K562 (cell line): ENCODE measurements at regions of chr7 and their contacts with region 1.

Region 1: GRCh38 chr7:106223156-106223555 is 61.6 kb downstream of the NAMPT start:
- DNase-seq: no peak
- ATAC-seq: no peak
- H3K4me3 ChIP-seq: no peak overlapping the region
- H3K27ac ChIP-seq: no peak overlapping the region
- H3K4me1 ChIP-seq: no peaks in the 10 kb centered on the region; a peak in 1 of 5 replicates
- H3K27me3 ChIP-seq: no peaks in the 10 kb centered on the region
- CTCF ChIP-seq: no peak
- EP300 ChIP-seq: no peak
- POLR2A ChIP-seq: no peak
- RAD21 ChIP-seq: no peak

Region 2: DNA sequence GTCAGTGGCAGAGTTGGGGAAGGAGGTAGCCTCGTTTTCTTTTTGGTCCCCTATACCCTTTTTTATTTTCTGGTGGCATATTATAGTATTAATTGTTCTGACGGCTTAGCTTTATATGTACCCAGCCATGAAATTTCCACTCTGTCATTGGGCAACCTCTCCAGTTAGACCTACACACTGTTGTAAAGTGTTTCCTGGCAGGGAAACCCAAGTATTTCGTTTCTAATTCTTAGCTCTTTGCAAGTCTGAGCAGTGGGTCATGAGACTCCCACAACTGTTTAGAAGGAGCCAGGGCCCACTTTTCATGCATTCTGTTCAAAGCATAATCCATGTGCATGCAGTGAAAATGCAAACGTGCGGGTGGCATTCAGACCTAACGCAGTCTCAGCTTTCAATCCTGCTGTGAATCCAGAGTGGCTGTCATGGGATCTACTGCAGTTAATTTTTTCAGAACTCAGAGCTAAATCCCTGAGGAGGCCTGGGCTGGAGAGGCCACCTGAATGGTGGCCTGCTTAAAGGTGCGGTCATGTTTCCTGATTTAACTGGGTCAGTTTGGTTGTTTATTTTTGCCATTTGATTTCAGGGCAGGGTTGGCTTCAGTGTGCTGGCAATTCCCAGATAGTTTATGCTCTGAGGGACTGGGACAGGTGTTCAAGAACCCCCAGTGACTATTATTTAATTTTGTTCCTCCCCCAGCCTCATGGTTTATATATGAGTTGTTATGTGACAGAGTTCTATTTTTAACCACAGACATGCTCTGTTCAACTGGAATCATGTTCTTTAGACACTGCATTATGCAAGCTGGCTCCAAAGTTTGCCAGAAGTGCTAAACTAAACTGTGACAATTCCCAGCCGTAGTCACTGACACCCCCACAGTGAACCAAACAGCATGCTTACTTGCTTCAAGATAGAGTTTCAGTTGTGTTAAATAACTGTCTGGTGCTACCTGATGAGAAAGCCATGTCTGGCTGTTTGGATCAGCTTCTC is 83.6 kb before region 1 on chr7:
- CTCF ChIA-PET with region 1: no interaction called
- POLR2A ChIA-PET with region 1: no interaction called
- in situ Hi-C with region 1: no loop called
- intact Hi-C with region 1: no loop called
- DNase-seq: no peak
- ATAC-seq: no peak; the same call in 1 of the 3 replicates
- H3K4me3 ChIP-seq: no peak overlapping the region
- H3K27ac ChIP-seq: no peak overlapping the region
- H3K4me1 ChIP-seq: no peaks in the 10 kb centered on the region
- H3K27me3 ChIP-seq: peaks cover 51 to 59% of the 10 kb centered on the region in 2 experiments
- CTCF ChIP-seq: no peak
- EP300 ChIP-seq: no peak
- POLR2A ChIP-seq: no peak
- RAD21 ChIP-seq: no peak

Region 3: GRCh38 chr7:106187613-106188350 is 35.4 kb before region 1 on chr7:
- CTCF ChIA-PET with region 1: no interaction called
- POLR2A ChIA-PET with region 1: no interaction called
- in situ Hi-C with region 1: no loop called
- intact Hi-C with region 1: loop called (anchors 5 kb)
- DNase-seq: peak in 1 of 4 experiments; percentile 28
- ATAC-seq: peak; percentile 57
- H3K4me3 ChIP-seq: no peak overlapping the region
- H3K27ac ChIP-seq: no peak overlapping the region
- H3K4me1 ChIP-seq: no peaks in the 10 kb centered on the region; a peak in 1 of 5 replicates
- H3K27me3 ChIP-seq: peaks cover 0 to 3% of the 10 kb centered on the region in 2 experiments; a peak in 3 of 5 replicates
- CTCF ChIP-seq: no peak
- EP300 ChIP-seq: no peak
- POLR2A ChIP-seq: no peak
- RAD21 ChIP-seq: no peak

Region 4: DNA sequence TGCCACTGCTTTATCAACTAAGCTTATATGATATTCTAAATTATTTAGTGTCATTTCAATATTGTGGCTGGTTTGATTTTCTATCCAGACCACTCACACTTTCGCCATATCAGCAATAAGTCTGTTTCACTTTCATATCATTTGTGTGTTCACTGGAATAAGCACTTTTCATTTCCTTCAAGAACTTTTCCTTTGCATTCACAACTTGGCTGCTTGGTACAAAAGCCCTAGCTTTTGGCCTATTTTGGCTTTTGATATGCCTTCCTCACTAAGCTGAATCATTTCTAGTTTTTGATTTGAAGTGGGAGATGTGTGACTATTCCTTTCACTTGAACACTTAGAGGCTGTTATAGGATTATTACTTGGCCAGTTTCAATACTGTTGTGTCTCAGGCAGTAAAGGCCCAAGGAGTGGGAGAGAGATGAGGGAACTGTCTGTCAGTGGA is 182.6 kb after region 1 on chr7:
- CTCF ChIA-PET with region 1: no interaction called
- POLR2A ChIA-PET with region 1: no interaction called
- in situ Hi-C with region 1: no loop called
- intact Hi-C with region 1: no loop called
- DNase-seq: no peak
- ATAC-seq: no peak
- H3K4me3 ChIP-seq: no peak overlapping the region
- H3K27ac ChIP-seq: no peak overlapping the region
- H3K4me1 ChIP-seq: no peaks in the 10 kb centered on the region
- H3K27me3 ChIP-seq: 0 out of 5 replicates have a peak, but pooled peaks cover 0 to 2% of the 10 kb centered on the region in 2 experiments
- CTCF ChIP-seq: no peak
- EP300 ChIP-seq: no peak
- POLR2A ChIP-seq: no peak
- RAD21 ChIP-seq: no peak

Region 5: DNA sequence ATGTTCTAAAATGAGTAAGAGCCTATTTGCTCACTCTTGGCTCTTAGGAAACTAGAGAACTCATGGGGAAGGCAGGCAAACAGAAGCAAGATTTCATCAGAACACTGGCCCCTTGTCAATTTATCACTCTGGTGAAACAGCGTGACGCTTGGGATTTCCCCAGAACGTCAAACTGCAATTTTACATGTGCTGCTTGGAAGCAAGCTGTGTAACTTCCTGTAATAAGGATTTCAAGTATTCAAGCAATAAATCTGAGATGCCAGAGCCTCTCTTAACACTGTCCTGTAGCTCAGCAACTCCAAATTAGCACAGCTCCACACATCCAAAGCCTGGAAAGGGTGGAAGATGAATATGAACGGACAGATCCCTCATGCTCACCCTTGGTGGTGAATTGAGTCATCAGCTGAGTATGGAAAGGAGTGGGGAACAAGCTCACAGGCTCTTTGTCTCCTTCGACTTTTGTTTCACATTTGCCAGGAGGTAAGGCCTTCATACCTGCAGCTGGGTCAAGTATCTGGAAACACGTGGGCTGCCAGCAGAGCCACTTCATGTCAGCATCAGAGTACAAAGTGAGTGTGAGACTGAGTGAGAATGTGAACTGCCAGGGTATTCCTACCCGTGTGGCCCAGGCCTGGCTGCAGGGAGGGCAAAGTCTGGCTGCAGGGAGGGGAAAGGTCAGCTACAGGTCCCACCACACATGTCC is 202.0 kb after region 1 on chr7:
- CTCF ChIA-PET with region 1: no interaction called
- POLR2A ChIA-PET with region 1: no interaction called
- in situ Hi-C with region 1: no loop called
- intact Hi-C with region 1: no loop called
- DNase-seq: peak in 1 of 4 experiments; percentile 38
- ATAC-seq: peak; percentile 47
- H3K4me3 ChIP-seq: no peak overlapping the region
- H3K27ac ChIP-seq: no peak overlapping the region
- H3K4me1 ChIP-seq: peaks cover 0 to 16% of the 10 kb centered on the region in 2 experiments; a peak in 4 of 5 replicates
- H3K27me3 ChIP-seq: no peaks in the 10 kb centered on the region; a peak in 2 of 5 replicates
- CTCF ChIP-seq: no peak
- EP300 ChIP-seq: peak; percentile 57
- POLR2A ChIP-seq: no peak
- RAD21 ChIP-seq: peak in 1 of 2 experiments; percentile 23; a peak in 1 of 4 replicates